ENCODE measurements at regions of chr4 and their contacts with region 1.

Region 1: DNA sequence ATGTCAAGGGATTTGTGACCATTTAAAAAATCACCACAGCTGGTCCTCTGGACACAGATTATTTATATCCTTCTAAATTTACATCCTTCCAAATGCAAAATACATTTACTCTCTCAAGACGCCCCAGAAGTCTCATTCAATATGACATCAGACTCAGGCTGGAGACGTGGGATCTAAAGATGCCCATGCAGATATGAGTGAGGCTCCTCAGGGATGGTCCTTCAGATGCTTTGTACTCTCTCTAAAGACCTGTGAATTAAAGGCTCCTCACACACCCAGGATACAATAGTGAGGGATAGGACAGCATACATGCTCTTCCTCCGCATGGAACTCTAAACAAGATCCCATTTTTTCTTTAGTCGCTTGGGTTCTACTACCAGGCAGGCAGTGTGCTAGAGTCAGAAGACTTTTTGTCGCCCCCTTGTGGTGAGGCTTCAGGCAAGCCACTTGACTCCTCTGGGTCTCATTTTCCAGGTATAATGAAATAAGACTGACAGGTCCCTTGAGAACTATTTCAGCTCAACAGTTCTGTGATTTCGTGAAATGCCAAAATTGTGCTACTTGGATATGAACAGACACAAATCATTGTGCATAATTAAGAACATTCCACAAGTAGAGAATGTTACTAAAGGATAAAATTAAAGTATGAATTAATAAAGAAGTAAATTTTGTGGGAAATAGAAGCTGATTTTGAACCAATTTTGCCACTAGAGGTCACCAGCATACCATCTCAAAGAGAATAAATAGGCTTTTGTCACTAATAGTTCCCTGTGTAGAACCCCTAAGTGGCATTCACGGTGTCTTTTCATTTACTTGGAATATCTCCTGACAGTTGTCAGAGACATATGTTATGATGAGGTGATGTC is 13.7 kb upstream of the SCOC start:
- DNase-seq: peak in 3 of 4 donors; percentile 61 to 78 (median 74)
- ATAC-seq: peak; percentile 98
- H3K4me3 ChIP-seq: no peak overlapping the region
- H3K27ac ChIP-seq: no peak overlapping the region
- H3K4me1 ChIP-seq: no peaks in the 10 kb centered on the region
- H3K27me3 ChIP-seq: no peaks in the 10 kb centered on the region
- CTCF ChIP-seq: peak; percentile 78 to 87

Region 2: DNA sequence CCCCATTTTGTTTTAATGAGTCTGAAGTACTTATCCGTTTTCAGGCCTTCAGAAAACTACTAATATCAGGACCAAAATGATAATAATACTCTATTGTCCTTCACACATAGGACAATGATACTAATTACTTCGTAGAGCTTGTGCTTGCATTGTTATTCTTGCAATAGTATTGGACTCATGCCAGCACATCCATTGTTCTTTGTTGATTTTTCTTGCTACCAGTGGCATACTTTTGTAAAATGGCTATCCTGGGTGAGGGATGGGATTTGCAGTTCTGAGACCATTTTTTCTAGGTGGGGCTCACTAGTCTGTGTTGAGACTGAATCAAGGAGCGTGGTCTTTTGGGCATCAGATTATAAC is 401.1 kb before region 1 on chr4:
- intact Hi-C with region 1: no loop called
- DNase-seq: no peak
- ATAC-seq: no peak
- H3K4me3 ChIP-seq: no peak overlapping the region
- H3K27ac ChIP-seq: no peak overlapping the region
- H3K4me1 ChIP-seq: peaks cover 0 to 14% of the 10 kb centered on the region in 2 donors
- H3K27me3 ChIP-seq: no peaks in the 10 kb centered on the region
- CTCF ChIP-seq: no peak

Region 3: GRCh38 chr4:140448830-140449229 is 89.0 kb after region 1 on chr4:
- intact Hi-C with region 1: no loop called
- DNase-seq: peak in 2 of 4 donors; percentile 36 to 47
- ATAC-seq: no peak
- H3K4me3 ChIP-seq: no peak overlapping the region
- H3K27ac ChIP-seq: no peak overlapping the region
- H3K4me1 ChIP-seq: no peaks in the 10 kb centered on the region
- H3K27me3 ChIP-seq: no peaks in the 10 kb centered on the region
- CTCF ChIP-seq: no peak

Region 4: GRCh38 chr4:140609548-140610425 is 250.0 kb after region 1 on chr4:
- intact Hi-C with region 1: loop called in 1 of 2 experiments (anchors 10 kb)
- DNase-seq: peak in 2 of 4 donors; percentile 42 to 64
- ATAC-seq: peak; percentile 88
- H3K4me3 ChIP-seq: no peak overlapping the region
- H3K27ac ChIP-seq: no peak overlapping the region
- H3K4me1 ChIP-seq: peaks cover 0 to 5% of the 10 kb centered on the region in 2 donors
- H3K27me3 ChIP-seq: no peaks in the 10 kb centered on the region
- CTCF ChIP-seq: peak; percentile 19 to 32